ENCODE measurements at regions of chr11 and their contacts with region 1.

Region 1: GRCh38 chr11:506238-506994 is 626 bp downstream of the RNH1 start:
- DNase-seq: peak; percentile 96 to 100 (median 97)

Region 2: GRCh38 chr11:369336-370018 is 136.9 kb before region 1 on chr11 and contains the start of gene B4GALNT4:
- intact Hi-C with region 1: loop called (anchors 5 kb)
- DNase-seq: peak; percentile 48 to 97 (median 78)

Region 3: GRCh38 chr11:662689-663274 is 156.4 kb after region 1 on chr11:
- intact Hi-C with region 1: no loop called
- DNase-seq: peak in 9 of 10 donors; percentile 49 to 95 (median 71)

Measured in posterior cingulate gyrus (tissue), 11 donors.